Heart left ventricle (tissue), 16 donors: ENCODE measurements at regions of chr18 and their contacts with region 1.

Region 1: GRCh38 chr18:70827632-70828031 is 538.8 kb downstream of the SOCS6 start:
- DNase-seq: no peak
- ATAC-seq: no peak
- H3K4me3 ChIP-seq: no peak overlapping the region
- H3K27ac ChIP-seq: no peak overlapping the region
- H3K4me1 ChIP-seq: no peaks in the 10 kb centered on the region
- H3K27me3 ChIP-seq: no peaks in the 10 kb centered on the region
- CTCF ChIP-seq: no peak
- POLR2A ChIP-seq: no peak

Region 2: DNA sequence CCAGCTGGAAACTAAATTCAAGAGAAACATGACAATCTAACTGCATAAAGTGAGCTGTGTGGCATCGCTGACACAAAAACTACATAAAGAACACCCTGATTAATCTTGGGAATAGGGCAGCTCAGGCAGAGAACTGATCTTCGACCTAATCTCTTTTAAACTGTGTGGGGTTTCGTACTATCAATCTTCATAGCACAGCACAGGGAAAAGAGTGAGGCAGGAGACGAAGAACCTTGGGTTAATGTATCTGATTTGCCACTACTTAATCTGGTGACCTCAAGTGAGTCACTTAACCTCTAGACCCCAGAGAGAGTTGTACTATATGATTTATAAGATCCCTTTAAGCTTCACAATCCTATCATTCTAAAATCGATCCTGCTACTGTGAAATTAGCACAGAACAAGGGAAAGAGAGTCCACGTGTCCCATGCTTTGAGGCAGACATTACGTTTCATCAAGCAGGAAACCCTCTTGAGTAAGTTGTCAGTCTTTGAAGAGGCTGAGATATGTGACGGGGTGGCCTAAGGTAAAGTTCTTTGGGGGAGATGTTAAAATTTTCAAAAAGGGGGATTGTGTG is 19.1 kb before region 1 on chr18:
- intact Hi-C with region 1: loop called in 1 of 10 experiments (anchors 1 kb)
- DNase-seq: no peak
- ATAC-seq: no peak
- H3K4me3 ChIP-seq: no peak overlapping the region
- H3K27ac ChIP-seq: no peak overlapping the region
- H3K4me1 ChIP-seq: no peaks in the 10 kb centered on the region
- H3K27me3 ChIP-seq: no peaks in the 10 kb centered on the region
- CTCF ChIP-seq: no peak
- POLR2A ChIP-seq: no peak